Activated T-helper 2 cell treated with anti-CD3 and anti-CD28 coated beads, Interferon-gamma antibody, Interleukin-2, Interleukin-4, amounts not matched to agents 10 μg/mL and 5 μg/mL and 100 μg/mL, durations not matched to agents 14 hours and 24 hours and 36 hours (primary cell): ENCODE measurements at regions of chr21 and their contacts with region 1.

Region 1: GRCh38 chr21:29091032-29091431 is 17.6 kb upstream of the CCT8 start:
- DNase-seq: no peak
- H3K4me3 Mint-ChIP-seq: no peak overlapping the region
- H3K27ac Mint-ChIP-seq: no peak overlapping the region
- H3K4me1 Mint-ChIP-seq: peaks cover 30% of the 10 kb centered on the region
- H3K27me3 Mint-ChIP-seq: peaks cover 5% of the 10 kb centered on the region

Region 2: GRCh38 chr21:29073222-29074006 is 17.6 kb before region 1 on chr21 and contains the start of gene CCT8:
- intact Hi-C with region 1: loop called (anchors 2 kb)
- DNase-seq: peak; percentile 99
- H3K4me3 Mint-ChIP-seq: peak within 1 kb of the TSS; percentile 99
- H3K27ac Mint-ChIP-seq: peak within 1 kb of the TSS; percentile 98
- H3K4me1 Mint-ChIP-seq: peaks cover 43% of the 10 kb centered on the region
- H3K27me3 Mint-ChIP-seq: no peaks in the 10 kb centered on the region
- total RNA-seq, gene CCT8: 366 and 387 TPM in 2 replicates

Region 3: DNA sequence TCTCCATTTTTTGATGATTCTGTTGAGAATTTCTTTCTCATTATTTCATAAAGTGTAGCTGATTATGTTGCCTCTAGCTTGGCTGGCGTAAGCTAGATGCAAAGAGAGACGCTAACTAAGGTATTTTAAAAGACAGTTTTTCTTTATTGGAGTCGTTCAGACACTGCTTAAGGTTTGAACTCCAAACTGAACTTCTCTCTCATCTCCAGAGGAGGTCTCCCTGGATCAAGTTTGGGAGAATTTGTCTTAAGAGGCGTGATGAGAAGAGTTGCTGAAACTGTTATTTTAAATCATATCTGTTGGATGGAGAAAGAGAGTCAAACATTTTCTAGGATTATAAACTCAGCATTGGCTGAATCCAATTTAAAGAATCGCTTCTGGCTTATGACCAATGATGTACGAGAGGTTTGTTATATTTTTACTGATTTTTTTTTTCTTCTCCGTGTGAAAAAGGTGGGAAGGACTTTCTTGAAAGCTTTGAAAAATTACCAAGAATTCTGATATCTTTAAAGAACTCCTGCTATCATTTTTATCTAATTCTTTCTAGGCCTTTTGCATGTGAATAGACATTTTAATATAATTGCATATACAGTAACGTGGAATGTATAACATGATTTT is 73.4 kb after region 1 on chr21:
- intact Hi-C with region 1: loop called (anchors 5 kb)
- DNase-seq: no peak
- H3K4me3 Mint-ChIP-seq: no peak overlapping the region
- H3K27ac Mint-ChIP-seq: no peak overlapping the region
- H3K4me1 Mint-ChIP-seq: peaks cover 3% of the 10 kb centered on the region
- H3K27me3 Mint-ChIP-seq: peaks cover 7% of the 10 kb centered on the region

Region 4: GRCh38 chr21:29232601-29233546 is 141.8 kb after region 1 on chr21:
- intact Hi-C with region 1: loop called (anchors 5 kb)
- DNase-seq: no peak
- H3K4me3 Mint-ChIP-seq: no peak overlapping the region
- H3K27ac Mint-ChIP-seq: no peak overlapping the region
- H3K4me1 Mint-ChIP-seq: peaks cover 37% of the 10 kb centered on the region
- H3K27me3 Mint-ChIP-seq: peaks cover 56% of the 10 kb centered on the region

Region 5: GRCh38 chr21:29298348-29299045 is 207.5 kb after region 1 on chr21 and contains the start of gene BACH1:
- intact Hi-C with region 1: loop called (anchors 2 kb)
- DNase-seq: peak; percentile 78
- H3K4me3 Mint-ChIP-seq: peak within 1 kb of the TSS; percentile 93
- H3K27ac Mint-ChIP-seq: peak within 1 kb of the TSS; percentile 91
- H3K4me1 Mint-ChIP-seq: peaks cover 43% of the 10 kb centered on the region
- H3K27me3 Mint-ChIP-seq: peaks cover 11% of the 10 kb centered on the region
- total RNA-seq, gene BACH1: 35.2 and 37.9 TPM in 2 replicates